ENCODE measurements at regions of chr7 and their contacts with region 1.

Region 1: GRCh38 chr7:112206238-112207044 is at the starts of genes DOCK4 and ZNF277:
- DNase-seq: peak; percentile 98 to 100 (median 99)
- H3K4me3 ChIP-seq: peak within 1 kb of the TSS; percentile 65 to 100 (median 94)
- H3K27ac ChIP-seq: peak within 1 kb of the TSS; percentile 70 to 99 (median 95)
- H3K27me3 ChIP-seq: no peaks in the 10 kb centered on the region
- CTCF ChIP-seq: peak in 32 of 56 donors; percentile 6 to 55 (median 28)
- total RNA-seq, gene DOCK4: 113 to 236 (median 152) TPM
- total RNA-seq, gene ZNF277: 14.7 to 33.1 (median 22.0) TPM

Region 2: DNA sequence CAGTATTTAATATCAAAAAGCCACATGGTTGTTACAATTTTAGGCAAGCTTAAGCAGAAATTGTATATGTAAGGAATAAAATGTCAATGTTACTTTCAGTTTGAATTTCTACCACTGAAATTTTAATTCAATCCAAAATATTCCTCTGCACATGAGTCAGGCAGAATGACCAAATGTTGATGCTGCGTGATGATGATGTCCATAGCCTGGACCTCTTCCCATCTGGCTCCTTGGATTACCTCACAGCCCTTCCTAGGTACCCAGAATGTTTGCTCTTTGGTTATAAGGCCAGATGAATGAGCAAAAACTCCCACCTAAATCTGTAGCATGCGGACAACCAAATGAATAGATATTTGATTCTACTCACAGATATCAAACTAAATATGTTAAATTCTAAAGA is 385.8 kb before region 1 on chr7:
- intact Hi-C with region 1: no loop called
- DNase-seq: peak in 1 of 10 donors; percentile 43
- H3K4me3 ChIP-seq: no peak overlapping the region
- H3K27ac ChIP-seq: peak overlapping the region in 40 of 59 donors; percentile 2 to 84 (median 59)
- H3K27me3 ChIP-seq: no peaks in the 10 kb centered on the region
- CTCF ChIP-seq: no peak

Region 3: DNA sequence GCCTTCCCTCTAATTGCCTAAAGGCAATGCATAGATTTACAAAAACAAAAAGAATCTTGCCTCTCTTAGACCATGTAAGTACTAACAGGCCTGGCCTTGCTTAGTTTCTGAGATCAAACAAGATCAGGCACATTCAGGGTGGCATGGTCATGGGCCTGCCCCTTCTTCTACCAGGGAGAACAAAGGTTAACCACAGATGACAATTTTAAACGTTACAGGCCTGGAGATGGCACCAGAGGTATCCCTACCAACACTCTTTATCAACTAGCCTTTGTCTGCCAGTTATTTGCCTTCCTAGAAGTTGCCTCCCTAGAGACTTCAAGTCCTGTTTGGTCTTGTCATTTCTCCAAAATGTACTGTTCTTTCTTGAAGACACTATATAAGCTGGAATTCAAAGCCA is 252.8 kb before region 1 on chr7:
- intact Hi-C with region 1: loop called in 1 of 2 experiments (anchors 2 kb)
- DNase-seq: peak in 1 of 10 donors; percentile 26
- H3K4me3 ChIP-seq: no peak overlapping the region
- H3K27ac ChIP-seq: peak overlapping the region in 58 of 59 donors; percentile 3 to 87 (median 70)
- H3K27me3 ChIP-seq: no peaks in the 10 kb centered on the region
- CTCF ChIP-seq: peak in 48 of 56 donors; percentile 10 to 66 (median 38)

Region 4: DNA sequence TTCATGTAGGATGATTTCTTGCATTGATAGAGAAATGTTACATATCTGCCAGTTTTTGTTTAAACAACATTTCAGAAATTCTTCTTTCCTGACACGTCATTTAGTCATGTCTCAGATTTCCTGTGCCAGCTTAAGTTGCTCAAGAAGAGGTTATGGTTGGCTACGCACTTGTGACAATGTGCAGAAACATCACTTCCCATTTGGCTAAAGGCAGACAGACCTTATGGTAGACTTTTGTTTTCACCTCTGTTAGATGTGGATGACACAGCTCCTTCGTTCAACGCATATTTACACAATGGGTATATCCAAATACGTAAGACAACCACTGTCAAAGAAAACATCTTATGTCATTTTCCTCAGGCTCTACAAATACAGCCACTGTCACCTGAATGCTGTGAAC is 126.0 kb before region 1 on chr7:
- intact Hi-C with region 1: loop called in 1 of 2 experiments (anchors 10 kb)
- DNase-seq: no peak
- H3K4me3 ChIP-seq: no peak overlapping the region
- H3K27ac ChIP-seq: peak overlapping the region in 53 of 59 donors; percentile 5 to 80 (median 58)
- H3K27me3 ChIP-seq: no peaks in the 10 kb centered on the region
- CTCF ChIP-seq: no peak

Region 5: GRCh38 chr7:112143582-112143981 is 62.9 kb before region 1 on chr7:
- intact Hi-C with region 1: loop called in 1 of 2 experiments (anchors 5 kb)
- DNase-seq: no peak
- H3K4me3 ChIP-seq: no peak overlapping the region
- H3K27ac ChIP-seq: peak overlapping the region in 39 of 59 donors; percentile 1 to 77 (median 48)
- H3K27me3 ChIP-seq: no peaks in the 10 kb centered on the region
- CTCF ChIP-seq: no peak

Region 6: DNA sequence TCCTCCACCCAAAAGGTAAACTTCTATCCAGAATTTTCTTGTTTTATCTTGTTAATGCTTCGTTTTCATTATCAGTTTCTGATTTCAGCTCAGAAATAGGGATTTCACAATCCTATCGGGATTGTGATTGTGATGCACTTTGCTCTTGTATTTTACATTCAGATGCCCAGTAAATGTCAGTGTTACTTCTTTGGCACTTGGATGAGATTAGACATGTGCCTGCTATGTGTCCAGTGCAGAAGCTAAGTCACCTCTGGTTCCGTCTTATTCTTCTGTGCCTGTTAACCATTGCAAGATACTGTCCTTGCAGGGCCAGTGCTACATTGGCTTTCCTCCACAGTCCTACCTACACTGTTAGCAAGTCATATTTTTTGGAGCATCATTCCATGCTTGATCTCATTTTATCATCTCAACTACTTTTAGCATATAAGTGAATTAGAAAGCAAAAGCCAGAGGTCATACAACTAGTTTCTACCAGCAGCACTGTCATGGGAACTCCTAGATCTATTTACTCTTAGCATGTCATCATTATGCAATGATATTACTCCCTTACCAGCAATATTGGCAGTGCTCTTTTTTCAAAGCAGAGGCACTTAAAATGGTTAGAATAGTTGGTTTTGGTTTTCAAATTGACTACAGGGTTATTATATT is 26.7 kb after region 1 on chr7:
- intact Hi-C with region 1: no loop called
- DNase-seq: no peak
- H3K4me3 ChIP-seq: no peak overlapping the region
- H3K27ac ChIP-seq: no peak overlapping the region
- H3K27me3 ChIP-seq: no peaks in the 10 kb centered on the region
- CTCF ChIP-seq: no peak

Region 7: GRCh38 chr7:112383671-112384417 is 177.4 kb after region 1 on chr7:
- intact Hi-C with region 1: loop called in 1 of 2 experiments (anchors 10 kb)
- DNase-seq: no peak
- H3K4me3 ChIP-seq: no peak overlapping the region
- H3K27ac ChIP-seq: no peak overlapping the region
- H3K27me3 ChIP-seq: no peaks in the 10 kb centered on the region
- CTCF ChIP-seq: peak in 8 of 56 donors; percentile 8 to 27 (median 16)

Region 8: DNA sequence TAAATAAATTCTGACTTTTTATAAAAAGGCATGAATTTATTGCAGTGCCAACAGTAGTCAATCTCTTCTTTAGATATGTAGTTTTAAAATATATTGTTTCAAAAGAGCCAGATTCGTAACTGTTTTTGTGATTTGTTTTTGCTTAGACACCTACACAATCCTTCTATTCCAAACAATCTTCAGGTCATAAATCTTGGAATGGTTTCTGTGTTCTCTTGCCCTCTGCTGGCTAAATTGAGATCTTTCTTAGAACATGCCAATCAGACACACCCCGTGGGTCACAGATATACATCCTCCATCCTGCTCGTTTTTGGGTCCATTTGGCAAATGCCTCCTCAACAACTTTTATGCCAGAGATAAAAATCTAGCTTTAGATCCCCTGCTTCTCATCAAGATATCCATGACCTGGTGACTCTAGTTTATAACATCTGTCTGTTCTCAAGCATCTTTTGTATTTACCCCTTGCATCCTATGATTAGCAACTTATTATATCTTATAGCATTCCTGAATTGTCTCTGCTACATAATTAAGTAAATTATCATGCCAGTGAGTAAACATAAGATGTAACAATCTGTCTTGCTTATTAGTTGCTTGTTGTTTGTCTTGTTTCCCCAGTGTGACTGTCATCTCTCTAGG is 208.5 kb after region 1 on chr7:
- intact Hi-C with region 1: loop called in 1 of 2 experiments (anchors 5 kb)
- DNase-seq: no peak
- H3K4me3 ChIP-seq: no peak overlapping the region
- H3K27ac ChIP-seq: no peak overlapping the region
- H3K27me3 ChIP-seq: no peaks in the 10 kb centered on the region
- CTCF ChIP-seq: peak; percentile 27 to 76 (median 60)

Measured in dorsolateral prefrontal cortex (tissue), 120 donors.